MCF 10A (cell line): ENCODE measurements at regions of chr10 and their contacts with region 1.

Region 1: GRCh38 chr10:119872860-119873681 is 428 bp upstream of the MCMBP start:
- DNase-seq: peak; percentile 77
- H3K4me3 Mint-ChIP-seq: peak overlapping the region; percentile 87
- H3K27ac Mint-ChIP-seq: peak overlapping the region; percentile 59
- H3K4me1 Mint-ChIP-seq: peaks cover 28% of the 10 kb centered on the region
- H3K27me3 Mint-ChIP-seq: no peaks in the 10 kb centered on the region
- CTCF ChIP-seq: no peak

Region 2: DNA sequence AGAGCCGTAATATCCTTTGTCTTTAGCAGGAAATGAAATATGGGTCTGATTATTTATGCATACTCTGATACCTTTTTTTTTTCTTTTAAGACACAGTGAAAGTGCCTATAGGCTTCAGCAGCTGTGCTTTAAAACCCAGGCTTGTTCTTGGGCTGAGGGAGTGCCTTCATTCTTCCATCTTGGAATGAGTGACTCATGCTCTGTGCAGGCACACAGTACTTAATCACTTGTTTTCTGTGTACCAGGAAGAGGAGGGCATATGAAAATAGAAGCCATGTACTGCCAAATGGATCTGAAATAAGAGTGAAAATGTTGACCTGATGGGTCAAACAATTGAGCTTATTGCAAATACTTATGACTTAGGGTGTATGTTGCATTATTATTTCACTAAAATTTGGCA is 135.2 kb before region 1 on chr10:
- CTCF ChIA-PET with region 1: interaction called, 3 read pairs
- POLR2A ChIA-PET with region 1: interaction called, 15 read pairs
- intact Hi-C with region 1: no loop called
- DNase-seq: peak; percentile 81
- H3K4me3 Mint-ChIP-seq: peak overlapping the region; percentile 68
- H3K27ac Mint-ChIP-seq: peak overlapping the region; percentile 86
- H3K4me1 Mint-ChIP-seq: peaks cover 18% of the 10 kb centered on the region
- H3K27me3 Mint-ChIP-seq: no peaks in the 10 kb centered on the region
- CTCF ChIP-seq: no peak

Region 3: DNA sequence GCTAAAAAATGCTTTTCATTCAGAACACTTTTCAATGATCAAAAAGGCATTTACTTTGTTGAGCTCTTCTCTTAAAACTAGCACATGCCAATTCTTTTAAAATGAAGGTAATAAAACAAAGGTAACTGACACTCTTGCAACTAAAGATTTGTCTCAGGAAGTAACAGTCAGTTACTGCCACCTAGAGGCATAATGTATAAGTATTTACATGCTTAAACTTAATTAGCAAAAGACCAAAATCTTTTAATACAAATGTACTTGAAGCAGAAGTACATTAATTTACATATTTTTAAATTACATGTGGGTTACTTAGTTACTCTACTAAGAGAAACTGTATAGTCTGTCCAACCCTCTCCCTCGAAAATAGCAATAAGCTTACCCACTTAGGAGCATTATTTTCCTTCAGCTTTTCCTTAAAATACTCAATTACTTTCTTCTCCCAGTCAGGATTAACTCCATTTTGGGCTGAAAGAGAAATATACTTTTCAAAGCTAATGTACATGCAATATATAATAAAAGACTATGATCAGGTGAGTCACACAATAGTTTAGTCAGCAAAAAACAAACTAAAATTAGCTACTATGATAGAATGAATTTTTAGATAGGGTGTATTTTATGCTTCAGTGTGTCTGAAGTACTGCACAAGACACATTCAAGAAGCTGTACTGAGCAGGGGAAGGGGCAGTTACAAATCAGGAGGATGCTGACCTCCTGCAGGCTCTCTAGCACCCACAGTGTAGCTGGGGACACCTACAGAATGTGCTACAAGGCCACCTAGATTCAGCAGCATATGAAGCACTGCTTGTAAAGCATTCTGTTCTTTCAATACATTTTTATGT is 13.4 kb before region 1 on chr10:
- CTCF ChIA-PET with region 1: interaction called, 41 read pairs
- POLR2A ChIA-PET with region 1: interaction called, 37 read pairs
- intact Hi-C with region 1: no loop called
- DNase-seq: peak; percentile 63
- H3K4me3 Mint-ChIP-seq: no peak overlapping the region
- H3K27ac Mint-ChIP-seq: peak overlapping the region; percentile 35
- H3K4me1 Mint-ChIP-seq: peaks cover 23% of the 10 kb centered on the region
- H3K27me3 Mint-ChIP-seq: no peaks in the 10 kb centered on the region
- CTCF ChIP-seq: peak; percentile 38

Region 4: GRCh38 chr10:119892188-119893065 is 19.4 kb after region 1 on chr10 and contains the start of gene SEC23IP:
- CTCF ChIA-PET with region 1: interaction called, 6 read pairs
- POLR2A ChIA-PET with region 1: interaction called, 122 read pairs
- intact Hi-C with region 1: loop called (anchors 1 kb)
- DNase-seq: peak; percentile 96
- H3K4me3 Mint-ChIP-seq: peak within 1 kb of the TSS; percentile 91
- H3K27ac Mint-ChIP-seq: peak within 1 kb of the TSS; percentile 88
- H3K4me1 Mint-ChIP-seq: peaks cover 43% of the 10 kb centered on the region
- H3K27me3 Mint-ChIP-seq: no peaks in the 10 kb centered on the region
- CTCF ChIP-seq: no peak
- total RNA-seq, gene SEC23IP: 60.5 and 64.9 TPM in 2 replicates